Prostate gland (tissue), 2 donors: ENCODE measurements at regions of chr14 and their contacts with region 1.

Region 1: GRCh38 chr14:55129428-55130195 is 560 bp downstream of the LGALS3 start:
- DNase-seq: peak; percentile 53
- H3K4me3 ChIP-seq: peak overlapping the region; percentile 74 to 80
- H3K27ac ChIP-seq: peak overlapping the region; percentile 90 to 91
- H3K4me1 ChIP-seq: peaks cover 5% of the 10 kb centered on the region
- H3K27me3 ChIP-seq: no peaks in the 10 kb centered on the region
- CTCF ChIP-seq: no peak
- POLR2A ChIP-seq: no peak

Region 2: GRCh38 chr14:55094321-55095157 is 35.1 kb before region 1 on chr14:
- intact Hi-C with region 1: loop called (anchors 5 kb)
- DNase-seq: no peak
- H3K4me3 ChIP-seq: no peak overlapping the region
- H3K27ac ChIP-seq: no peak overlapping the region
- H3K4me1 ChIP-seq: no peaks in the 10 kb centered on the region
- H3K27me3 ChIP-seq: no peaks in the 10 kb centered on the region
- CTCF ChIP-seq: no peak
- POLR2A ChIP-seq: no peak